HepG2 (cell line): ENCODE measurements at regions of chr18 and their contacts with region 1.

Region 1: DNA sequence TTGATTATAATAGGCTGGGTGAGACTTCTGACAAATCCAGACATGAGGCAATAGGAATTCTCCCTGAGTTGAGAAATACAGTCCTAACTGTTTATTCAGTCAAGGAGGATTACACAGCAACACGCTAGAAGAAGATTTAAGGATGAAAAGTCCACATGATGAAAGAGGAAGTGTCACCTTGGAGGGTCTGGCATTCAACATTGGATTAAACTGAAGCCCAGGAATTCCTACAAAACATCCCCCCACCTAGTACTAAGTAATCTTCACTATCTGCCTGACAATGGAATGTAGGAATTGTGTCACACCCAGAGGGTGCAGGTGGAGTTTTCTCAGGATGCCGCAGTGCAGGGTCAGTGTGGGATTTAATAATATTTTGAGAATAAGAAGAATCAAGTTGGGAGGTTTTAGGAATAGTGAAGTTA is 142.4 kb downstream of the SOCS6 start:
- DNase-seq: peak; percentile 98
- ATAC-seq: peak; percentile 81
- H3K4me3 ChIP-seq: no peak overlapping the region
- H3K27ac ChIP-seq: peak overlapping the region; percentile 75
- H3K4me1 ChIP-seq: peaks cover 53% of the 10 kb centered on the region
- H3K27me3 ChIP-seq: no peaks in the 10 kb centered on the region
- CTCF ChIP-seq: no peak
- EP300 ChIP-seq: peak; percentile 91 to 97
- POLR2A ChIP-seq: no peak
- RAD21 ChIP-seq: no peak

Region 2: DNA sequence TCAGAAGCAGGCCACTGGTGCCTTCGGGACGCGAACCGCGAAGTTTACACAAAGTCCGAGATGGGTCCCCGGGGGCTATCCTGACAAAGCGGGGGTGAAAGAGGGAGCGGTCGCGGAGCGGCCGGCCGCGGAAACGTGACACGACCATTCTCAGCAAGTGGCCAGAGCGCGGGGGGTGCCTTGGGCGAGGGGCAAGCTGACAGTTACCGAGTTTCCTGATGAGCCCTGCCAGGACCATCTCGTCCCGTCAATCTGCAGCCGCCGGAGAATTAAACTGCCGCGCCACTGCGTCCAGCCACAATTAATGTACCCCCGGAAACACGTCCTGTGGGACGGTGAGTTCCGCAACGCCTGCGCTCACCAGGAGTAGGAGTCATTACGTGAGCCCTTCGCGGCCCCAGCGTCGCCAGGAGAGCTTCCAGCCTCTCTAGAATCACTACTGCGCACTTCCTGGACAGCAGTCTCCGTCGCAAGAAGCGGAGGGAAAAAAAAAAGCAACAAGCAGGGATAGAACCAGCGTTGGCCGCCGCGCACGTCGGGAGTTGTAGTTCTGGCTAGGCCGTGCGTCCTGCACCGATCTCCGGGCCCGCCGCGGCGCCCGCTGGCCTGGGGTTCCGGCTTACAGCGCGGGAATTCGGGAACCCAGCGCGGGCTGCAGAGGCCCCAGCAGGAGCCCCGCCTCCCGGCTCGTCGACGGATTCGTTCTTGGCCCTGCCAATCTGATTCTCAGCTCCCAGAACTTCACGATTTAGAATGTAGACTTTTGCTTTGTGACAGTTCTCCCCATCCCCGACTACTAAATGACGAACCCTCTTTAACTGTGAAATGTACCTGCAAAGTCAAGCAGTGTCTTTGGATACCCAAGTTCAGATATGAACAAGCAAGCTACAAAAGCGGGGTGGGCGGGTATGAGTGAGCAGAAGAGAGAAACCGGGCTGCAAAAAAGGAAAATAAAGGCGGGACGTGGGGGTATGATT is 225.5 kb before region 1 on chr18 and contains the start of gene RTTN:
- CTCF ChIA-PET with region 1: interaction called, 6 read pairs
- POLR2A ChIA-PET with region 1: interaction called, 3 read pairs
- in situ Hi-C with region 1: no loop called
- intact Hi-C with region 1: loop called (anchors 2 kb)
- DNase-seq: peak; percentile 87
- ATAC-seq: peak; percentile 99
- H3K4me3 ChIP-seq: peak within 1 kb of the TSS; percentile 92 to 98 (median 96)
- H3K27ac ChIP-seq: peak within 1 kb of the TSS; percentile 98
- H3K4me1 ChIP-seq: peaks cover 26% of the 10 kb centered on the region
- H3K27me3 ChIP-seq: no peaks in the 10 kb centered on the region; a peak in 1 of 5 replicates
- CTCF ChIP-seq: peak; percentile 19
- EP300 ChIP-seq: no peak
- POLR2A ChIP-seq: peak; percentile 37 to 48; a peak in 3 of 4 replicates
- RAD21 ChIP-seq: peak; percentile 10
- total RNA-seq, gene RTTN: 12.5 and 18.7 TPM in 2 replicates

Region 3: GRCh38 chr18:70296289-70296688 is 134.9 kb before region 1 on chr18:
- CTCF ChIA-PET with region 1: no interaction called
- POLR2A ChIA-PET with region 1: no interaction called
- in situ Hi-C with region 1: no loop called
- intact Hi-C with region 1: loop called (anchors 5 kb)
- DNase-seq: peak; percentile 89
- ATAC-seq: peak; percentile 99
- H3K4me3 ChIP-seq: peak overlapping the region; percentile 23 to 55 (median 29); a peak in 4 of 6 replicates
- H3K27ac ChIP-seq: peak overlapping the region; percentile 59
- H3K4me1 ChIP-seq: peaks cover 67% of the 10 kb centered on the region
- H3K27me3 ChIP-seq: no peaks in the 10 kb centered on the region
- CTCF ChIP-seq: peak; percentile 21; the same call in 1 of the 2 replicates
- EP300 ChIP-seq: no peak
- POLR2A ChIP-seq: peak in 1 of 2 experiments; percentile 34; a peak in 1 of 4 replicates
- RAD21 ChIP-seq: 0 out of 2 replicates have a peak, but pooled peaks have one; percentile 17

Region 4: GRCh38 chr18:70331456-70332097 is 99.6 kb before region 1 on chr18:
- CTCF ChIA-PET with region 1: no interaction called
- POLR2A ChIA-PET with region 1: interaction called, 46 read pairs
- in situ Hi-C with region 1: loop called (anchors 10 kb)
- intact Hi-C with region 1: loop called (anchors 1 kb)
- DNase-seq: peak; percentile 51
- ATAC-seq: peak; percentile 5
- H3K4me3 ChIP-seq: peak overlapping the region in 1 of 3 experiments; percentile 5; a peak in 1 of 6 replicates
- H3K27ac ChIP-seq: peak overlapping the region; percentile 97
- H3K4me1 ChIP-seq: peaks cover 76% of the 10 kb centered on the region
- H3K27me3 ChIP-seq: no peaks in the 10 kb centered on the region
- CTCF ChIP-seq: peak; percentile 28
- EP300 ChIP-seq: peak in 1 of 2 experiments; percentile 49; a peak in 1 of 4 replicates
- POLR2A ChIP-seq: no peak
- RAD21 ChIP-seq: no peak

Region 5: DNA sequence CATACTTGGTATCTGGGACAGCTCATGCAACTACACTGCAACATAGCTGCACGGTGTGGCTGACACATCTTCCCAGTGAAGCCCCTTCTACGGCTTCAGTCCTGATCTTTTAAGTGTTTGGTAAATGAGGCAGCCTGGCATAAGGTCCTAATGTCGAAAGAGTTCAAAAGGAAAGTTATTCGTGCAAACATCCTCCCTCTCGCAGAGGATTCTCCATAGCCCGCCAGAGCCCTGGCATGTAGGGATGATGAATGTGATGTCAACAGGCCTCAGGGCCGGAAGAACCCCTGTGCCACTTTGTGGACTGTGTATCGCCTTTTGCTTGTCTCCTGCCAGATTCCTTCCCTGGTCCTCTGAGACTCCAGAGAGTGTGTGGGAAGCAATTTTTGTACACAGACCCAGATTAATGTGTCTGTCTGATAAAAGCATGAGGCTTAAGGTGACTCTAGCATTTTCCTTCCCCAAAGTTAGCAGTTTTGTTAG is 53.9 kb before region 1 on chr18:
- CTCF ChIA-PET with region 1: interaction called, 11 read pairs
- POLR2A ChIA-PET with region 1: interaction called, 39 read pairs
- in situ Hi-C with region 1: loop called (anchors 5 kb)
- intact Hi-C with region 1: loop called (anchors 1 kb)
- DNase-seq: peak; percentile 93
- ATAC-seq: peak; percentile 62
- H3K4me3 ChIP-seq: peak overlapping the region; percentile 32 to 47 (median 34); a peak in 5 of 6 replicates
- H3K27ac ChIP-seq: peak overlapping the region; percentile 99
- H3K4me1 ChIP-seq: peaks cover 95% of the 10 kb centered on the region
- H3K27me3 ChIP-seq: no peaks in the 10 kb centered on the region
- CTCF ChIP-seq: no peak
- EP300 ChIP-seq: peak in 1 of 2 experiments; percentile 83; a peak in 2 of 4 replicates
- POLR2A ChIP-seq: peak in 1 of 2 experiments; percentile 28; a peak in 1 of 4 replicates
- RAD21 ChIP-seq: no peak

Region 6: GRCh38 chr18:70454704-70455322 is 23.6 kb after region 1 on chr18:
- CTCF ChIA-PET with region 1: interaction called, 3 read pairs
- POLR2A ChIA-PET with region 1: no interaction called
- in situ Hi-C with region 1: no loop called
- intact Hi-C with region 1: loop called (anchors 1 kb)
- DNase-seq: peak; percentile 60
- ATAC-seq: peak; percentile 47; the same call in 2 of the 3 replicates
- H3K4me3 ChIP-seq: no peak overlapping the region
- H3K27ac ChIP-seq: no peak overlapping the region
- H3K4me1 ChIP-seq: peaks cover 37% of the 10 kb centered on the region
- H3K27me3 ChIP-seq: no peaks in the 10 kb centered on the region
- CTCF ChIP-seq: peak; percentile 74
- EP300 ChIP-seq: no peak
- POLR2A ChIP-seq: no peak
- RAD21 ChIP-seq: peak; percentile 57; the same call in 1 of the 2 replicates

Region 7: GRCh38 chr18:71808616-71809015 is 1377.4 kb after region 1 on chr18:
- CTCF ChIA-PET with region 1: no interaction called
- POLR2A ChIA-PET with region 1: no interaction called
- in situ Hi-C with region 1: no loop called
- intact Hi-C with region 1: no loop called
- DNase-seq: no peak
- ATAC-seq: no peak
- H3K4me3 ChIP-seq: no peak overlapping the region
- H3K27ac ChIP-seq: no peak overlapping the region
- H3K4me1 ChIP-seq: no peaks in the 10 kb centered on the region
- H3K27me3 ChIP-seq: no peaks in the 10 kb centered on the region
- CTCF ChIP-seq: no peak
- EP300 ChIP-seq: no peak
- POLR2A ChIP-seq: no peak
- RAD21 ChIP-seq: no peak